Activated CD4-positive, alpha-beta T cell treated with anti-CD3 and anti-CD28 coated beads, Interleukin-2, amount 10 ng/mL, durations not matched to agents 7 days and 5 days (primary cell): ENCODE measurements at regions of chr1 and their contacts with region 1.

Region 1: DNA sequence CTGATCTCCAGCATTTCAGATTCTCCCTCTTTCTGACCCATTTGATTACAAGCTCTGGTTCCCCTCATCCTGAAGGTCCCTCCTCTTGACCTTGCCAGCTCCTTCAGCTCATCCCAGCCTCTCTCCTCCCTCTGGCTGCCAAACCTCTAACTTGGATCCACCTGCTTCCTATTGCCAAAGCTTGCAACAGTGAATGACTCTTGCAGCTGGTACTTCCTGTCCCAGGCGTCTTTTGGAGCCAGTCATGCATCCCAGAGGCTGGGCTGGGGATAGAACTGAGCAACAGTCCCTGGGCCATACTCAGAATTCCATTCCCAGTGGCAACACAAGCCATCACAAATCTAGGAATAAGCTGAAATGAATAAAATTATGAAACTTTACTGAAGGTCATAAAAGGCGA is 27.7 kb upstream of the SPOCD1 start:
- DNase-seq: no peak
- H3K4me3 Mint-ChIP-seq: no peak overlapping the region
- H3K27ac Mint-ChIP-seq: no peak overlapping the region
- H3K4me1 Mint-ChIP-seq: peaks cover 46% of the 10 kb centered on the region
- H3K27me3 Mint-ChIP-seq: no peaks in the 10 kb centered on the region

Region 2: DNA sequence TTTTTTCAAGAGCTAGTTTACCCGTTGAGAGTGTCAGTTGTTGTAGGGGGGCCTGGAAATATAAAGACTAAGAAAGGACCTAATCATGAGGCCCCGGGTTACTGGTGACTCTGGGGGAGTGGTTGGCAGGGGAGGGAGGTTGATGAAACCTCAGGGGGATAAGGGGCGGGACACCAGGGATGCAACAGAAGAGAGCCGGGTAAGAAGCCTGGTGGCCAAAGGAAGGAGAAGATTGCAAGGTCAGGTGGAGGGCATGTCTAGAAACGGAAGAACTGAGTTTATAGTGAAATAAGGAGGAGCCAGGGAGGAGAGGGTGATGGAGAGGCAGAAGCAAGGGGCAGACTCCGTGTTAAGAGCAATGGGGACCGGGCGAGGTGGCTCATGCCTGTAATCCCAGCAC is 15.2 kb before region 1 on chr1:
- CTCF ChIA-PET with region 1: interaction called, 13 read pairs
- POLR2A ChIA-PET with region 1: no interaction called
- DNase-seq: no peak
- H3K4me3 Mint-ChIP-seq: no peak overlapping the region
- H3K27ac Mint-ChIP-seq: peak overlapping the region; percentile 76
- H3K4me1 Mint-ChIP-seq: peaks cover 33% of the 10 kb centered on the region
- H3K27me3 Mint-ChIP-seq: no peaks in the 10 kb centered on the region